Astrocyte of the cerebellum (primary cell): ENCODE measurements at regions of chr6 and their contacts with region 1.

Region 1: DNA sequence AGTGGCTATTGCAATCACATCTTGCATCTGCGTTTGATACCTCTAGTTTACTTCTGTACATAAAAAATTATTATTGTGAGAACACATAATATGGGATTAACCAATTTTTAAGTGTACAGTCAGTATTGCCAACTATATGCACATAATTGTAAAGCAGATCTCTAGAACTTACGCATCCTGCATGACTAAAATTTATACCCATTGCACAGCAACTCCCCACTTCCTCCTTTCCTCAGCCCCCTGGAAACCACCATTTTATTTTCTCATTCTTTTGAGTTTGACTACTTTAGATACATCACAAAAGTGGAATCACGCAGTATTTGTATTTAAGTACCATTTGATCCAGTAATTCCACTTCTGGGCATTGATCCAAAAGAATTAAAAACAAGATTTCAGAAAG is 19.3 kb upstream of the OPN5 start:
- DNase-seq: no peak
- H3K4me3 ChIP-seq: no peak overlapping the region
- CTCF ChIP-seq: no peak

Region 2: GRCh38 chr6:47722194-47722593 is 40.3 kb before region 1 on chr6:
- in situ Hi-C with region 1: loop called (anchors 5 kb)
- DNase-seq: no peak
- H3K4me3 ChIP-seq: no peak overlapping the region
- CTCF ChIP-seq: no peak

Region 3: DNA sequence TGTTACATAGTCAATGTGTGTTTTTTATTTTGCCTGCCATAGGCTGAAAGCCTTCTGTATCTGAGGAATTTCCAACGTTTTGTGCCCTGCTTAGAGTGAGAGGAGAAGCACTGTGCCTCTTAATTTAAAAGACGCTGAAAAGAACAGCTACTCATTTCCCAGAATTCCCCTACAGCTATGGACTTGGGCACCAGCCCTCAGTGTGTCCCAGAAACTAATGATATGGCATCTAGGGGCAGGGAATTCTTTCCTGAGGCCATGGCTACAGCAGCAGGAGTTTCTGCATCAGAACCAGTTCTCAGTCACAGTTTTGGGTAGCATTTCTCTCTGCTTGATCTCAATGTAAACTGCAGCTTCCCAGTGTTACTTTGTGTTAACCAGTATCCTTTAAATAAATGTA is 39.5 kb after region 1 on chr6:
- in situ Hi-C with region 1: no loop called
- DNase-seq: no peak
- H3K4me3 ChIP-seq: no peak overlapping the region
- CTCF ChIP-seq: no peak